OCI-LY7 (cell line): ENCODE measurements at regions of chr13 and their contacts with region 1.

Region 1: DNA sequence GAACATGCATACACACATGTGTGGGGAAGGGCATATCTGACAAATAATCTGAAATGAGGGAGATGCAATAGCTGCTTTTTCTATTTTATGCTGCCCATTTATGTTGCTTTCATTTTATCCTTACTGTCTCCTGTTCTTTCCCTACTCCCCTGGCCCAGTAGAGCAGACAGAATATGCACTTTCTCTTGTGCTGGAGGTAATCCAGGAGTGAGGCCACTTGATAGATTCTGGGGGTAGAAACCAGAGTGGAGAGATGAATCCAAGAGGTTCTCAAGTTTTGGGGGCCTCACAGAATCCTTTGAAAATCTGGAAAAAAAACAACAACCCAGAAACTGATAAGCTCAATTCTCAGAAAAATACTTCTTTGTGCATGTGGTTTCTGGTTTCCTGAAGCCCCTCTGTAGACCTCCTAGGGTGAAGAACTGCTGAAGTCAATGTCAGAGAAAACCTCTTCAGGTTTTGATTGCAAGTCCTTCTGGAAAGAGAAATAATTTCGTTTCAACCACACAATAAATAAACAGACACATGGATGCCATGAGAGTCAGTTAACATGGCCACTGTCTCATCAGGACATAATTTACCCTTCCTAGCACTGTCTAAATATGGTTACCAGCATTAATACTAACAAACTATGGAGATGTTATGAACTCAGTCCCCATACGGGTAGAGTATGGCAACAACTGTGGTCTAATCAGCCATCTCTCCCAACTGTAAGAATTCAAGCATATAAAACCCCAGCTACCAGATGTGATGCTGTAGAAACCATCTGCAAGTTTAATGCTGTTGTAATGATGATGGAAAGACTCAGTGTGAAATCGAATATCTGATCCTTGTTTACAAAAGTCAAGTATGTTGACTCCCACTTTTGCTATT is 355.6 kb downstream of the SLC7A1 start:
- DNase-seq: no peak
- H3K4me3 ChIP-seq: no peak overlapping the region
- H3K27ac ChIP-seq: no peak overlapping the region
- H3K4me1 ChIP-seq: no peaks in the 10 kb centered on the region
- CTCF ChIP-seq: no peak

Region 2: GRCh38 chr13:29101409-29101808 is 138.5 kb before region 1 on chr13:
- CTCF ChIA-PET with region 1: no interaction called
- POLR2A ChIA-PET with region 1: interaction called, 10 read pairs
- intact Hi-C with region 1: no loop called
- DNase-seq: no peak
- H3K4me3 ChIP-seq: no peak overlapping the region
- H3K27ac ChIP-seq: no peak overlapping the region
- H3K4me1 ChIP-seq: no peaks in the 10 kb centered on the region
- CTCF ChIP-seq: no peak

Region 3: GRCh38 chr13:29548722-29549121 is 308.8 kb after region 1 on chr13:
- CTCF ChIA-PET with region 1: no interaction called
- POLR2A ChIA-PET with region 1: no interaction called
- intact Hi-C with region 1: no loop called
- DNase-seq: no peak
- H3K4me3 ChIP-seq: no peak overlapping the region
- H3K27ac ChIP-seq: no peak overlapping the region
- H3K4me1 ChIP-seq: no peaks in the 10 kb centered on the region
- CTCF ChIP-seq: no peak